ENCODE measurements at regions of chr4 and their contacts with region 1.

Region 1: GRCh38 chr4:186891859-186892486 is 168.3 kb upstream of the FAT1 start:
- DNase-seq: no peak

Region 2: DNA sequence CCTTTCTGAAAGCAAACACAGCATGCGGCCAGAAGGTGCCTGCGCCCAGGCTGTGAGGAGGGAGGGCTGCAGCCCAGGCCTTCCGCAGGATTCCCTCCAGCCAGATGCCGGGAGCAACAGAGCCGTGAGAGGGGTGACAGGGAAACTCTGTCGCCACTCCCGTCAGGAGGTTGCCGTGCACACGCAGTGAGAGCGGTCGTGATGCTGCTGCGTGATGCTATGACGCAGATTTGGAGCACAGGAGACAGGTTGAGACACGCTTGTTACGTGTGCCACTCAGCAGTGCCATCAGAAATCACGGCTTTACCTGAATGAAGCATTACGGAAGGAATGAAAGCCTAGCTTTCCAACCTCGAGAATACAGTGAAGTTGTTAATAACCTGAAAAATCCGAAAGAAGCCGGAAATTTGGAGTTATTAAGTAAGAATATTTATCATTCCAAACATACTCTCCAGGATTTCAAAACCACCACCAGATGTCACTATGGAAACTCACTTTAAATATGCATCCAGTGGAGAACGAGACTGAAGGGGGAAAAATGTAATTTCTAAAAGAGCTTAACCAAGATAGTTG is 222.7 kb before region 1 on chr4:
- intact Hi-C with region 1: no loop called
- DNase-seq: no peak

Region 3: GRCh38 chr4:186845137-186845842 is 46.7 kb before region 1 on chr4:
- intact Hi-C with region 1: loop called in 1 of 2 experiments (anchors 2 kb)
- DNase-seq: no peak

Region 4: GRCh38 chr4:186875476-186875875 is 16.5 kb before region 1 on chr4:
- intact Hi-C with region 1: no loop called
- DNase-seq: no peak